ENCODE measurements at regions of chr12 and their contacts with region 1.

Region 1: GRCh38 chr12:9869307-9870161 is at the start of gene CLEC2B:
- DNase-seq: no peak
- H3K4me3 Mint-ChIP-seq: peak within 1 kb of the TSS; percentile 85
- H3K27ac Mint-ChIP-seq: peak within 1 kb of the TSS; percentile 92
- H3K4me1 Mint-ChIP-seq: peaks cover 19% of the 10 kb centered on the region
- H3K27me3 Mint-ChIP-seq: no peaks in the 10 kb centered on the region
- total RNA-seq, gene CLEC2B: 79.6 to 79.7 TPM

Region 2: DNA sequence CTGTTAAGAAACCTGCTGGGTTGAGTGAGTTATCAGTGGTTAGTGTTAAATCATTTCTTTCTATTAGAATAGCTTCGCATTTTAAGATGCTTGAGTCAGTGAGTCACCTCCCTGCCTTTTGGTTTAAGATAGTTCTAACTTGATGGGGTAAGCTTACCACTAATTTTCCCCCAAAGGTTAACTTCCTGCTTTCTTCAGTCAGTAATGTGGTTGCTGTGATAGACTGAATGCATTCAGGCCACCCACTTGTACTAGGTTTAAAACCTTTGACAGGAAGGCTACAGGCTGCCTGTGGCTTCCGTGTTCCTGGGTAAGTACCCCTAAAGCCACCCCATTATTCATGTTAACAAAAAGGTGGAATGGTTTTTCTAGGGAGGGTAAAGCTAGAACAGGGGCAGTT is 37.3 kb after region 1 on chr12:
- CTCF ChIA-PET with region 1: interaction called, 7 read pairs
- POLR2A ChIA-PET with region 1: interaction called, 27 read pairs
- DNase-seq: peak; percentile 37
- H3K4me3 Mint-ChIP-seq: no peak overlapping the region
- H3K27ac Mint-ChIP-seq: peak overlapping the region; percentile 51
- H3K4me1 Mint-ChIP-seq: peaks cover 22% of the 10 kb centered on the region
- H3K27me3 Mint-ChIP-seq: no peaks in the 10 kb centered on the region